Posterior cingulate gyrus (tissue), 11 donors: ENCODE measurements at regions of chr16 and their contacts with region 1.

Region 1: GRCh38 chr16:71883849-71884638 is at the start of gene ZNF821:
- DNase-seq: peak; percentile 53 to 97 (median 76)

Region 2: GRCh38 chr16:71808593-71809459 is 75.2 kb before region 1 on chr16 and contains the start of gene AP1G1:
- intact Hi-C with region 1: loop called (anchors 10 kb)
- DNase-seq: peak; percentile 90 to 99 (median 94)

Region 3: GRCh38 chr16:71845639-71846430 is 38.2 kb before region 1 on chr16 and contains the start of gene ATXN1L:
- intact Hi-C with region 1: loop called (anchors 5 kb)
- DNase-seq: peak; percentile 83 to 99 (median 88)

Region 4: DNA sequence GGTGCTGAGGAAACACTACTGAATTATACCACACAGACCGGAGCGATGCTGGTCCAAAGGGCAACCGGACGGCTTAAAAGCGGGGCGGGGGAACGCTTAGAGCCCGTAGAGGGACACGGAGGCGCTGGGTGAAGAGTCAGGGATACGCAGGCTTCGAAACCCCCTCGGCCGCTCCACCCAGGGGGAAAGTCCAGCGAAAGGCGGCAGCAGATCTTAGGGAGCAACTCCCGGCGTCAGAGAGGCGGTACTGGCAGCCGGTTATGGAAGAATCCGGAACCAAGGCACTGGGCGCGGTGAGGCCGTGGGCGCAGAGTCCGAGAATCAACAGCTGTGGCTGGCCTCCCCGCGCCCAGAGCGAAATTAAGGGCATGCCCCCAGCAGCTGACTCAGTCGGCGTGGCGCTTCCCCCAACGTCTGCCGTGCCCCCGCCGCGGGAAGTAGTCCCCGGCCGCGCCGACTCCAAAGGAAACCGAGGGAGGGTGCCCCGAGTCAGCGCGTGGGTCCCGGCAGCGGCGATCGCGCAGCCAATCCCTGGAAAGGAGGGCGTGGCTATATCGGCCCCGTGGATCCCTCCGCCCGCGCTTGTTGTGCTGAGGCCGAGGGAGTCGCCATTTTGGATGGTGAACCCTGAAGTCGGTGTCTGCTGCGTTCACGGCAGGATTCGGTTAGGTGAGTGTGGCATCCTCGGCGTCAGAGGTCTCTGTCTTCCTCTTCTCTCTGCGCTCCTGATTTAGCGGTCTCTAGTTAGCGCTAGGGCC is 11.1 kb after region 1 on chr16 and contains the start of gene IST1:
- intact Hi-C with region 1: loop called (anchors 1 kb)
- DNase-seq: peak; percentile 95 to 100 (median 98)

Region 5: GRCh38 chr16:71961066-71962039 is 77.3 kb after region 1 on chr16:
- intact Hi-C with region 1: loop called (anchors 2 kb)
- DNase-seq: peak; percentile 79 to 97 (median 90)